Posterior vena cava (tissue), 2 donors: ENCODE measurements at regions of chr9 and their contacts with region 1.

Region 1: DNA sequence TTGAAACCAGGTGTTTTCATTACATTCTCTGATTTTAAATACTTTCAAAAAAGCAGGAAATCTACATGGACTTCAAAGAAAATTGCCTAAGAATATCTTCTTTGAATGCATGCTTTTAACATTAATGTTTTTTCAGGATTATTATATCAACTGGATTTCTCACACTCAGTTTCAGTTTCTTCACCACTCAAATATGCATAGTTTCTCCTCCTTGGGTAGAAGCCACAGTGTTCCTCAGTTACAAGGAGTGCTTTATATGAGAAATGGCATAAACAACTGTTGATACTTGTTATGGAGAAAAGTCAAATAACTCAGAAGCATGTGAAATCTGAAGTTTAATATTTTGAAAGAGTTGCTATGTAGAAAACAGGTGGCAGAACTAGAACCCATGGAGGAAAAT is 196.9 kb downstream of the DMRTA1 start:
- DNase-seq: no peak

Region 2: GRCh38 chr9:22693156-22693555 is 49.6 kb after region 1 on chr9:
- intact Hi-C with region 1: loop called in 1 of 2 experiments (anchors 10 kb)
- DNase-seq: no peak